Stomach (tissue), 19 donors: ENCODE measurements at regions of chrX and their contacts with region 1.

Region 1: DNA sequence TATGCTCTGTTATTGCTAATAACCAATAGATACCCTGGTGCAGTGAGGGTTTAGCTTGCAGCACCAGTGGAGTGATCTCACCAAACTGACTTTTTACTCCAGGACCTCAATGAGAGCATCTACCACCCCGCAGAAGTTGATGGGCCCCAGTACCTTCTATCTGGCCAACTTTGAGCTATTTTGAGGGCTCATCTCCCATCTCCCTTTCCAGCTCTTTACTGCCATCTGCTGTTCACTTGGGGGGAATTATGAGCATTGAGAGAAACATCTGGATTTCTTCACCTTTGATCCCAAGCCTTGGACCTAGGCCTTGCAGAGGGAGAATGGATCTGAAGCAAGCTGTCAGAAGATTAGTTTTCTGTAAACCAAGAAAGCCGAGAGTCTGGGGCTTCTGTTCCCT is 143.6 kb downstream of the TMEM164 start:
- DNase-seq: peak in 1 of 2 donors; percentile 76
- H3K4me3 ChIP-seq: no peak overlapping the region
- H3K27ac ChIP-seq: no peak overlapping the region
- H3K4me1 ChIP-seq: peaks cover 0 to 5% (median 0%) of the 10 kb centered on the region in 4 donors
- H3K27me3 ChIP-seq: no peaks in the 10 kb centered on the region
- CTCF ChIP-seq: peak in 3 of 7 experiments; percentile 31 to 63 (median 51)
- EP300 ChIP-seq: no peak
- POLR2A ChIP-seq: no peak

Region 2: DNA sequence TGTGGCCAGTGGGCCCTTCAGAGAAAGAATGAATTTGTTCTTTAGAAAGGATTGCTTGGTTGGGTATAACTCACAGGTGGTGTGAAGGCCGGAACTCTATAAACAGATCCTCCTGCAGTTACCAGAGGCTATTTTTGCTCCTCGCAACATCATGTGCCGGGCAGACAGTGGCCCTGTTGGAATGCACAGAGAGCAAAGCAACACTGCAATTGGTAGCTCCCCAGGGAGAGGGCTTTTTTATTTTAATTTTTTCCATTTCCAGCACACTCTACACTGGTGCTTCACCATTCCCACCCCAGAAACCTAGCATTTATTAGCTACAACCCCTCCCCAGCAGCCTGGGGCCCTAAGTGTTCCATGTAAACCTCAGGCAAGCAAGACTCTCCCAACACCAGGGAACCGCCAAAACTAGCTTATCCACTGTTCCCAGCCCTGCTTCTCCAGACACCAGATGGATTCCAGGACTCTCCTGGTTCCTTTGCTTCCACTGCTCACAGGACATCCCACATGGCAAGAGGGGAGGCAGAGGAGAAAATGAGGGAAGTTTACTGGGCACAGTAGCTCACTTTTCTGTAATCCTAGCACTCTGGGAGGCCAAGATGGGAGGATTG is 218.8 kb before region 1 on chrX:
- intact Hi-C with region 1: loop called (anchors 10 kb)
- DNase-seq: no peak
- H3K4me3 ChIP-seq: no peak overlapping the region
- H3K27ac ChIP-seq: no peak overlapping the region
- H3K4me1 ChIP-seq: no peaks in the 10 kb centered on the region
- H3K27me3 ChIP-seq: no peaks in the 10 kb centered on the region
- CTCF ChIP-seq: no peak
- EP300 ChIP-seq: no peak
- POLR2A ChIP-seq: no peak